Calu3 (cell line): ENCODE measurements at regions of chr15 and their contacts with region 1.

Region 1: DNA sequence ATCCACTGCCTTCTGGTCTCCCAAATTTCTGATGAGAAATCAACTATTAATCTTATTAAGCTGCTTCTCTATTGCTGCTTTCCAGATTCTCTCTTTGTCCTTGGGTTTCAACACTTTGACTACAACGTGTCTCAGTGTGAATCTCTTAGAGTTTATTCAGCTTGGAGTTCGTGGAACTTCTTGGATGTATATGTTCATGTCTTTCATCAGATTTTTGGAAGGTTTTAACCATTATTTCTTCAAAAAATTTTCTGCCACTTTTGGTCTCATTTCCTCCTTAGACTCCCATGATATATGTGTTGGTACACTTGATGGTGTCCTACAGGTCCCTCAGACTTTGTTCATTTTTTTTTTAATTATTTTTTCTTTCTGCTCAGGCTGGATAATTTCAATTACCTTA is 36.0 kb downstream of the TICRR start:
- DNase-seq: no peak
- H3K4me3 Mint-ChIP-seq: no peak overlapping the region
- H3K27ac Mint-ChIP-seq: no peak overlapping the region
- H3K4me1 Mint-ChIP-seq: peaks cover 9% of the 10 kb centered on the region
- H3K27me3 Mint-ChIP-seq: no peaks in the 10 kb centered on the region
- CTCF ChIP-seq: no peak

Region 2: DNA sequence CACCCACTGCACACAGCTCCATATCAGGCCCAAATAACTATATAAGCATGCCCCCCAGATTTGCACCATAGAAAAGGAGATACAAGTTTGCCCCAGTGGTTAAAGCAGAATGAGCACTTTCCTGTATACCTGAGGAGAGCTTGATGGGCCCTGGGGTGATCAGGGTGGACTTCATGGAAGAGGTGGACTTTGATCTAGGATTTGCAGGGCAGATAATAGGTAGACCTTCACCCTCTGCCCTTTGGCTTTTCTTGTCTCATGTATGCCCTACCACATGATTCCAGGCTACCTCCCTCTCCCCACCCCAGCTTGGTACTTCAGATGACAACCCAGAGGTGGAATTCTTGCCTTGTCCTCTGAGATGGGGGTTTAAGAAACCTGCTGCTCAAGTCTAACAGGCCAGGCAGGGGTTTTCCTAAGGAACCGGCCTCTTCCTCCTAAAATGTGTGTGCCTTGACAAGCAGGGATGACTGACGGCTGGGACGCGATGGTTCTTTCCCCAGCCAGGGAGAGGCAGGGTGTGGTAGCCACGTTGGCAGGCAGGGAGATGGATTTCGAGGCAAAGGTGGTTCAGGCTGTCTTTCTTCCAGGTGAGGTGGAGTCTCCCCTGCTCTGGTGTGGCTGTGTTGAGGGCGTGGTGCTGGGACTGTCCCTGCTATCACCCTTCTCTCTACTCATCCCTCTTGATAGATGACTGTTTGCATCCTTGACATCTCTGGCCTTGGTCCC is 108.3 kb before region 1 on chr15:
- CTCF ChIA-PET with region 1: no interaction called
- intact Hi-C with region 1: no loop called
- DNase-seq: peak; percentile 67
- H3K4me3 Mint-ChIP-seq: no peak overlapping the region
- H3K27ac Mint-ChIP-seq: no peak overlapping the region
- H3K4me1 Mint-ChIP-seq: peaks cover 48% of the 10 kb centered on the region
- H3K27me3 Mint-ChIP-seq: no peaks in the 10 kb centered on the region
- CTCF ChIP-seq: no peak

Region 3: DNA sequence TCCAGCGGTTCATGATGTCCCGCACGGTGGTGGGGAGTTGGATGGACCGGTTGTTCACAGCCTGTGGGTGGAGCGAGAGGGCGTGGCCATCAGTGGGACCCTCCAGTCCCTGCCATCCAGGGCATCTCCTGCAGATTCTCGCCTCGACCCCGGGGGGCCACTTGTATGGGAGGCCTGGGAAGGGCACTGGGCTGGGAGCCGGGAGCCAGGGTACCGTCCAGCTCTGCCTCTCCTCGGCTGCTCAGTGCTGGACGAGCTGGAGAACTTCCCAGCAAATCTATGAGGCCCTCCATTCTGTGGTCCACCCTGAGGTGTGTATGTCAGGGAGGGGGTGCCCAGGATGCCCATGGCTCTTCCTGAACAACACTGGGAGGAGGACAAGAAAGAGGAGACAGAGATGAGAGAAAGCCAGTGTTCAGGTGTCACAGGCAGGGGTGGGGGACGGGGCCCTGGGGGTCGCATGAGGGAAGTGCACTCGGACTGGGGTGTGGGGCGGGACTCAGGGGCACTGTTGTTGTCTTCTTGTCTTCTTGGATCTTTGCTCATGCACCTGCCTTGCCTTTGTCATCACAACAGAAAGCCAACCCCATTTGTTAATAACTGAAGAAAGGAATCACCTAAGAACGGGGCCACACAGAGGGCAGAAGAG is 190.4 kb after region 1 on chr15:
- CTCF ChIA-PET with region 1: interaction called, 12 read pairs
- intact Hi-C with region 1: no loop called
- DNase-seq: no peak
- H3K4me3 Mint-ChIP-seq: no peak overlapping the region
- H3K27ac Mint-ChIP-seq: no peak overlapping the region
- H3K4me1 Mint-ChIP-seq: peaks cover 6% of the 10 kb centered on the region
- H3K27me3 Mint-ChIP-seq: peaks cover 17% of the 10 kb centered on the region
- CTCF ChIP-seq: no peak